ENCODE measurements at regions of chr7 and their contacts with region 1.

Region 1: GRCh38 chr7:102464577-102465280 is at the starts of genes ALKBH4 and LRWD1:
- DNase-seq: peak; percentile 82
- H3K4me3 ChIP-seq: peak within 1 kb of the TSS; percentile 82 to 97 (median 93)
- H3K27ac ChIP-seq: peak within 1 kb of the TSS; percentile 26
- H3K4me1 ChIP-seq: peaks cover 12% of the 10 kb centered on the region
- H3K27me3 ChIP-seq: no peaks in the 10 kb centered on the region
- CTCF ChIP-seq: peak in 1 of 2 donors; percentile 32
- total RNA-seq, gene ALKBH4: 9.2 to 12.5 TPM
- total RNA-seq, gene LRWD1: 17.8 to 18.3 TPM

Region 2: DNA sequence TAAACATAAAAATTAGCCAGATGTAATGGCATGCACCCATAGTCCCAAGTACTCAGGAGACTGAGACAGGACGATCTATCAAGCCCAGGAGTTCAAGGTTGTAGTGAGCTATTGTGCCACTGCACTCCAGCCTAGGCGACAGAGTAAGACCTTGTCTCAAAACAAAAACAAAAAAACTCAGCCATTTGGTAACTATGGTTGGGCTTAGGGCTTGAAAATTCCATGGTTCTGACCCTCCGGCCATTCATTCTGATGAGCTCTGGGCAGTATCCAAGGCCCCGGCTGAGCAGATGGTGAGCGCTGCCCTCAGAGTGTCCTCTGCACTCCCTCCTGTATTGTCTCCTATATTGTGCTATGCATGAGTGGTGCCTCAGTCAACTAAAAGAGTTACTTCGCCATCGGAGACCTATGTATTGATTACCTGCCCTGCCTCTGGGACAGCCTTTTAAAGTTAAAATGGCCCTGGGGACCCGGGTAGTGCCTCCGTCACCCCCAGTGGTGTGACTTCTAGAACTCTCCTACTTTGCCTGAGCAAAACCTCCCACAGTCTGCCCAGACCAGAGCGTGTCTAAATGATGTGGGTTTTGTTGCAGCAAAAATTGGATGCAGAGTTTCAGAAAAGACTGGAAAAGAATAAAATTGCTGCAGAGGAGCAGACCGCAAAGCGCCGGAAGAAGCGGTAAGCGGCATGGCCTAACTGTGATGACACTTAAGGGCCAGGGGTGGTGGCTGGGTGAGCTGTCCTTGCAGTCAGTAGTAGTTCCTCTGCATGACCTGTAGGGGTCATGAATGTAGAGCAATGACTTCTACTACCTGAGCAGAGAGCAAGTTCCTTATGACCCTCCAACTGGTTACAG is 60.5 kb before region 1 on chr7:
- CTCF ChIA-PET with region 1: no interaction called
- dilution Hi-C with region 1: no loop called
- in situ Hi-C with region 1: no loop called
- intact Hi-C with region 1: loop called (anchors 1 kb)
- DNase-seq: peak; percentile 33
- H3K4me3 ChIP-seq: no peak overlapping the region
- H3K27ac ChIP-seq: no peak overlapping the region
- H3K4me1 ChIP-seq: no peaks in the 10 kb centered on the region
- H3K27me3 ChIP-seq: no peaks in the 10 kb centered on the region
- CTCF ChIP-seq: peak; percentile 70 to 76

Region 3: GRCh38 chr7:102412548-102412947 is 52.2 kb before region 1 on chr7:
- CTCF ChIA-PET with region 1: no interaction called
- dilution Hi-C with region 1: no loop called
- in situ Hi-C with region 1: no loop called
- intact Hi-C with region 1: loop called (anchors 1 kb)
- DNase-seq: no peak
- H3K4me3 ChIP-seq: no peak overlapping the region
- H3K27ac ChIP-seq: no peak overlapping the region
- H3K4me1 ChIP-seq: no peaks in the 10 kb centered on the region
- H3K27me3 ChIP-seq: no peaks in the 10 kb centered on the region
- CTCF ChIP-seq: peak; percentile 50 to 57

Region 4: GRCh38 chr7:102897856-102898531 is 433.3 kb after region 1 on chr7:
- CTCF ChIA-PET with region 1: no interaction called
- dilution Hi-C with region 1: no loop called
- in situ Hi-C with region 1: no loop called
- intact Hi-C with region 1: no loop called
- DNase-seq: no peak
- H3K4me3 ChIP-seq: no peak overlapping the region
- H3K27ac ChIP-seq: no peak overlapping the region
- H3K4me1 ChIP-seq: peaks cover 4% of the 10 kb centered on the region
- H3K27me3 ChIP-seq: no peaks in the 10 kb centered on the region
- CTCF ChIP-seq: no peak

Region 5: DNA sequence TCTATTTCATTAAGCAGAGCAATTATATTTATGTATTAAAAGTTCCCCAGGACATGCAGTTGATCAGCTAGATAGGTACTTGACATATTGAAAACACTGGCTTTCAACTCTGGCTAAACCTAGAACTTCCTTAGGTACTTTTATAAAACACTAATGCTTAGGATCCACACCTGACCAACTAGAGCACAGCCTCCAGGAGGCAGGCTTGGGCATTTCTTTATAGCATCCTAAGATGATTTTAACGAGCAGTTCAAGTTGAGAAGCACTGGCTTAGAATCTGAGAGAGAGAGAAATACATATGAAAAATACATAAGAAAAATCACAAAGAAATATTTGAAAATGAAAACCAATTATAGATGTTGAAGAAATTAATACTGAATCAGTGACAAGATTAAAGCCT is 960.5 kb after region 1 on chr7:
- CTCF ChIA-PET with region 1: no interaction called
- dilution Hi-C with region 1: no loop called
- in situ Hi-C with region 1: no loop called
- intact Hi-C with region 1: no loop called
- DNase-seq: no peak
- H3K4me3 ChIP-seq: no peak overlapping the region
- H3K27ac ChIP-seq: no peak overlapping the region
- H3K4me1 ChIP-seq: no peaks in the 10 kb centered on the region
- H3K27me3 ChIP-seq: no peaks in the 10 kb centered on the region
- CTCF ChIP-seq: no peak

Region 6: DNA sequence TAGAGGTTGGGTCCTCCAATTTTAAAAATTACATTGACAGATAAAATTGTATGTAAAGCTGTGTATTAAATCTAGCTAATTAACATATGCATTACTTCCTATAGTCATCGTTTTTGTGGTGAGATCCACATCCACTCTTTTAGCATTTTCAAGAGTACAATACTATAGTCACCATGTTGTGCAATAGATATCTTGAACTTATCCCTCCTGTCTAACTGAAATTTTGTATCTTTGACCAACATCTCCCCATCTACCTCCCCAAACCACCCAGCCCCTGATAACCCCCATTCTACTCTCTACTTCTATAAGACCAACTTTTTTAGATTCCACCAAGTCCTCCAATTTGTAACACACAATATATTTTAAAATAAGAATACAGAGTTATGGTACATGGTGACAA is 1316.7 kb after region 1 on chr7:
- CTCF ChIA-PET with region 1: no interaction called
- dilution Hi-C with region 1: no loop called
- in situ Hi-C with region 1: no loop called
- intact Hi-C with region 1: no loop called
- DNase-seq: no peak
- H3K4me3 ChIP-seq: no peak overlapping the region
- H3K27ac ChIP-seq: no peak overlapping the region
- H3K4me1 ChIP-seq: no peaks in the 10 kb centered on the region
- H3K27me3 ChIP-seq: peaks cover 5% of the 10 kb centered on the region
- CTCF ChIP-seq: no peak

Measured in mammary epithelial cell (primary cell).